ENCODE measurements at regions of chr14 and their contacts with region 1.

Region 1: DNA sequence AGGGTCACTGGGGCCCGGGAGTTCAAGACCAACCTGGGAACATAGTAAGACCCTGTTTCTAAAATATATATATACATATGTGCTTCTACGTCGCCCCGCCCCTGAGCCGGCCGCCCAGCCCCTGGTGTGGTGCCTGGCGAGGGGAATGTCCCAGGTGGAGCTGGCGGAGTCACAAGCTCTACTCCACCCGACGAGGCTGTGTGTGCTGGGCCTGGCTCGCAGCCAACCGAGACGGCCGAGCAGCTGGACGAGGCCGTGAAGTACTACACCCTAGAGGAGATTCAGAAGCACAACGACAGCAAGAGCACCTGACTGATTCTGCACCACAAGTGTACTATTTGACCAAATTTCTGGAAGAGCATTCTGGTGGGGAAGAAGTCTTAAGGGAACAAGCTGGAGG is 22.1 kb upstream of the ITPK1 start:
- DNase-seq: no peak
- ATAC-seq: no peak
- H3K4me3 ChIP-seq: no peak overlapping the region
- H3K27ac ChIP-seq: no peak overlapping the region
- H3K4me1 ChIP-seq: peaks cover 0 to 4% of the 10 kb centered on the region in 2 experiments; a peak in 2 of 4 replicates
- H3K27me3 ChIP-seq: no peaks in the 10 kb centered on the region
- CTCF ChIP-seq: 0 out of 6 replicates have a peak, but pooled peaks of 1 of the 3 experiments have one; percentile 4
- POLR2A ChIP-seq: no peak
- RAD21 ChIP-seq: no peak

Region 2: DNA sequence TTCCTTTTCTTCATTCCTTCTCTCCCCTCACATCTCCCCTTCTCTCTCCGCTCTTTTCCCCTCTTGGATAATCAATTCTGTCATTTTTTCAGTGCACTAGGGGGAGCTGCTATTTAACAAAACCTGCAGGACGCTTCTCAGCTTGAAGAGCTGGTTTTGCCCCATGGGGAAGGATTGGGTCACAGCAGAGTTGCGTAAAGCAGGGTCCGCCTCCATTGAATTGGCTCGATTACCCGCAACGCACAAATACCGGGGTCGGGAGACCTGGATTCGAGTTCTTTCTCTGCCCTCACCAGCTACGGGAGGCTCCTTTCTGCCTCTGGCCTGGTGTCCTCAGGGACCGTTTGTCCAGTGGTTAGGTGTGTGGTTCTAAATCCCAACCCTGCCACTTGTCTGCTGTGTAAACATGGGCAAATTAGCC is 257.0 kb before region 1 on chr14:
- CTCF ChIA-PET with region 1: interaction called, 5 read pairs
- POLR2A ChIA-PET with region 1: no interaction called
- RAD21 ChIA-PET with region 1: no interaction called
- intact Hi-C with region 1: loop called (anchors 1 kb)
- DNase-seq: peak; percentile 22
- ATAC-seq: peak; percentile 90
- H3K4me3 ChIP-seq: no peak overlapping the region
- H3K27ac ChIP-seq: no peak overlapping the region
- H3K4me1 ChIP-seq: no peaks in the 10 kb centered on the region; a peak in 2 of 4 replicates
- H3K27me3 ChIP-seq: peaks cover 4% of the 10 kb centered on the region
- CTCF ChIP-seq: peak; percentile 49 to 69 (median 55); a peak in 5 of 6 replicates
- POLR2A ChIP-seq: no peak
- RAD21 ChIP-seq: peak; percentile 79

Region 3: GRCh38 chr14:92973261-92973797 is 164.5 kb before region 1 on chr14:
- CTCF ChIA-PET with region 1: no interaction called
- POLR2A ChIA-PET with region 1: no interaction called
- RAD21 ChIA-PET with region 1: no interaction called
- intact Hi-C with region 1: loop called (anchors 5 kb)
- DNase-seq: no peak
- ATAC-seq: peak; percentile 72
- H3K4me3 ChIP-seq: no peak overlapping the region
- H3K27ac ChIP-seq: no peak overlapping the region
- H3K4me1 ChIP-seq: no peaks in the 10 kb centered on the region
- H3K27me3 ChIP-seq: no peaks in the 10 kb centered on the region
- CTCF ChIP-seq: peak; percentile 40 to 79 (median 74); a peak in 5 of 6 replicates
- POLR2A ChIP-seq: no peak
- RAD21 ChIP-seq: peak; percentile 66

Measured in HCT116 (cell line).